Kidney (tissue), 22 donors: ENCODE measurements at regions of chr1 and their contacts with region 1.

Region 1: GRCh38 chr1:30719406-30720270 is 3.7 kb downstream of the MATN1 start:
- DNase-seq: peak in 1 of 5 donors; percentile 71
- H3K4me3 ChIP-seq: peak overlapping the region in 1 of 3 donors; percentile 71
- H3K27ac ChIP-seq: peak overlapping the region in 1 of 2 donors; percentile 99
- H3K4me1 ChIP-seq: peaks cover 0 to 9% (median 8%) of the 10 kb centered on the region in 3 donors
- H3K27me3 ChIP-seq: no peaks in the 10 kb centered on the region
- CTCF ChIP-seq: no peak

Region 2: GRCh38 chr1:30779294-30780071 is 59.8 kb after region 1 on chr1:
- intact Hi-C with region 1: loop called (anchors 5 kb)
- DNase-seq: peak; percentile 86 to 92 (median 87)
- H3K4me3 ChIP-seq: no peak overlapping the region
- H3K27ac ChIP-seq: no peak overlapping the region
- H3K4me1 ChIP-seq: peaks cover 0 to 5% (median 4%) of the 10 kb centered on the region in 3 donors
- H3K27me3 ChIP-seq: no peaks in the 10 kb centered on the region
- CTCF ChIP-seq: peak; percentile 94